ENCODE measurements at regions of chr14 and their contacts with region 1.

Region 1: DNA sequence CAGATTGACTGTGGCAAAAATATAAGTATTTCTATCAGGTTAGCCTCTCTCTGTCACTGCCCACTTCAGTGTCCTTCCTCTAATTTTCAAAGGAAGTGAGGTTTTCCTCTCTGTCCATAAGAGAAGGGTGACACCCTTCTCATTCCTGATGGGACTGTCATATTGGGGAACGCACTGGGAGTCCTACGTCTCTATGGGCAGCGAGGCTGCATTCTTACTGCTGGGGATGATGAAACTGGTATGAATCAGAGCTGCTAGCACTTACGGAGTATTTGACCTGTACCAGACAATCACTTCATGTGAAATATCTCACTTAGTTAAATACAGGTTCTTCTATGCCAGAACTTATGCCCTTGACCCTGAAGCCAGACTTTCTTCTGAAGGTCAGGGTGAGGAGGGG is 436.3 kb downstream of the DPF3 start:
- DNase-seq: no peak
- ATAC-seq: no peak
- H3K4me3 ChIP-seq: no peak overlapping the region
- H3K27ac ChIP-seq: no peak overlapping the region
- H3K4me1 ChIP-seq: no peaks in the 10 kb centered on the region
- H3K27me3 ChIP-seq: no peaks in the 10 kb centered on the region
- CTCF ChIP-seq: no peak

Region 2: DNA sequence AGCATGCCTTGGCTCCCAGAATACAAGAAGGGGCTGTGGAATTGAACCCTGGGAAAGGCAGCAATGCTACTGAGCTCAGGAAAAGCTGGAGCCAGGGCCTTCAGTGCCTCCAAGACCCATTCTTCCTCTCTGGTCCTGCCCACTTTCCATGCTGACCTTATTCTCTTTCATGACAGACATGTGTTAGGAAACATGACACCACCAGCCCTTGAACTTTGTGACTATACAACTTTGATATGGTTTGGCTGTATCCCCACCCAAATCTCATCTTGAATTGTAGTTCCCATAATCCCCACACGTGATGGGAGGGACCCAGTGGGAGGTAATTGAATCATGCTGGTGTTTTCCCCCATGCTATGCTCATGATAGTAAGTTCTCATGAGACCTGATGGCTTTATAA is 28.1 kb after region 1 on chr14:
- CTCF ChIA-PET with region 1: no interaction called
- POLR2A ChIA-PET with region 1: no interaction called
- in situ Hi-C with region 1: no loop called
- intact Hi-C with region 1: no loop called
- DNase-seq: no peak
- ATAC-seq: no peak
- H3K4me3 ChIP-seq: no peak overlapping the region
- H3K27ac ChIP-seq: no peak overlapping the region
- H3K4me1 ChIP-seq: no peaks in the 10 kb centered on the region
- H3K27me3 ChIP-seq: no peaks in the 10 kb centered on the region; the same call in 1 of the 2 replicates
- CTCF ChIP-seq: no peak

Region 3: GRCh38 chr14:72535485-72535884 is 77.8 kb after region 1 on chr14:
- CTCF ChIA-PET with region 1: no interaction called
- POLR2A ChIA-PET with region 1: interaction called, 14 read pairs
- in situ Hi-C with region 1: no loop called
- intact Hi-C with region 1: no loop called
- DNase-seq: no peak
- ATAC-seq: no peak
- H3K4me3 ChIP-seq: no peak overlapping the region
- H3K27ac ChIP-seq: no peak overlapping the region
- H3K4me1 ChIP-seq: no peaks in the 10 kb centered on the region
- H3K27me3 ChIP-seq: no peaks in the 10 kb centered on the region; the same call in 1 of the 2 replicates
- CTCF ChIP-seq: no peak

Measured in Panc1 (cell line).